ENCODE measurements at regions of chr10 and their contacts with region 1.

Region 1: GRCh38 chr10:60299961-60300883 is 89.5 kb downstream of the ANK3 start:
- DNase-seq: peak; percentile 65 to 90 (median 70)
- ATAC-seq: peak; percentile 85
- H3K4me3 ChIP-seq: peak overlapping the region; percentile 36
- H3K27ac ChIP-seq: peak overlapping the region; percentile 88
- H3K4me1 ChIP-seq: peaks cover 7 to 24% of the 10 kb centered on the region in 2 experiments; a peak in 4 of 5 replicates
- H3K27me3 ChIP-seq: no peaks in the 10 kb centered on the region
- CTCF ChIP-seq: peak in 2 of 3 experiments; percentile 20 to 44; a peak in 2 of 6 replicates
- EP300 ChIP-seq: peak; percentile 54
- POLR2A ChIP-seq: peak; percentile 72
- RAD21 ChIP-seq: peak in 1 of 2 experiments; percentile 23; a peak in 2 of 4 replicates

Region 2: DNA sequence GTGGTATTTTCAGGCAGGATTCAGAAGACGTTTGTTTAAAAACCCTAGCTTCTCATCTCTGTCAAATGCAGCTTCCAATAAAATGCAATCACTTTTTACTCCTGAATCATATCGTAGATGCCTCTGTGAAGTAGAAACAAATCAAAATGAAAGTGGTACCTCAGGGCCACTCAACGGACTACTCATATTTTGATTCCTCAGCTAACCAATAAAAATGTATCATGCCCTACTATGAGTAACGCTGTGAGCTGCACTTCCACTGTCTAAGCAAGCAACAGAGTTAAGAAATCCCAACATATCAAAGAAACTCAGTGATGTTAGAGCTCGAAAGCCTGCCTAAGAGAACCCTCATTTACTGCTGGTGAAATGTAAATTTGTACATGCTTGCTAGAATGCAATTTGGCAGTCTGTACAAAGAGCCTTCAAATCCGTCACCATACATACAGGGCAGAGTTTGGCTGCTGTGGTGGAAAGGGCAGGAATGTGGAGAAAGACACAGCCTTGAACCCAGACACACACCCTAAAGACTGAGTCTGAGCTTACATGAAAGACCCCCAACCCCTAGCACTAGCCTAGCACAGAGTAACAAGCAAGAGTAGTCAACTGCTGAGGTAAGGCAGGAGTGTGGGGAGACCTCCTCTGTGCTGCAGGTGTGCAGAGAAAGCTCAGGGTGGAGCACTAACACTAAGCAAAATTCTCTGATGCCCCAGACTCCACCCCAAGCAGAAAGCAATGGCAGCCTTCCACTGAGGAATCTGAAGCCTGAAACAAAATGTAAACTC is 62.1 kb before region 1 on chr10:
- CTCF ChIA-PET with region 1: no interaction called
- POLR2A ChIA-PET with region 1: no interaction called
- in situ Hi-C with region 1: no loop called
- intact Hi-C with region 1: loop called (anchors 2 kb)
- DNase-seq: peak in 2 of 4 experiments; percentile 60 to 62
- ATAC-seq: peak; percentile 99
- H3K4me3 ChIP-seq: no peak overlapping the region
- H3K27ac ChIP-seq: no peak overlapping the region
- H3K4me1 ChIP-seq: peaks cover 5 to 12% of the 10 kb centered on the region in 2 experiments; a peak in 2 of 5 replicates
- H3K27me3 ChIP-seq: no peaks in the 10 kb centered on the region
- CTCF ChIP-seq: peak; percentile 64 to 81 (median 76)
- EP300 ChIP-seq: no peak
- POLR2A ChIP-seq: no peak
- RAD21 ChIP-seq: peak; percentile 90 to 91

Region 3: GRCh38 chr10:60312818-60313588 is 12.8 kb after region 1 on chr10:
- CTCF ChIA-PET with region 1: no interaction called
- POLR2A ChIA-PET with region 1: interaction called, 28 read pairs
- in situ Hi-C with region 1: no loop called
- intact Hi-C with region 1: no loop called
- DNase-seq: peak; percentile 26 to 85 (median 58)
- ATAC-seq: peak; percentile 79
- H3K4me3 ChIP-seq: no peak overlapping the region
- H3K27ac ChIP-seq: peak overlapping the region; percentile 85
- H3K4me1 ChIP-seq: peaks cover 11 to 59% of the 10 kb centered on the region in 2 experiments
- H3K27me3 ChIP-seq: no peaks in the 10 kb centered on the region
- CTCF ChIP-seq: no peak
- EP300 ChIP-seq: peak; percentile 94
- POLR2A ChIP-seq: no peak
- RAD21 ChIP-seq: peak in 1 of 2 experiments; percentile 27; a peak in 2 of 4 replicates

Region 4: GRCh38 chr10:60589376-60589775 is 289.2 kb after region 1 on chr10:
- CTCF ChIA-PET with region 1: no interaction called
- POLR2A ChIA-PET with region 1: no interaction called
- in situ Hi-C with region 1: no loop called
- intact Hi-C with region 1: no loop called
- DNase-seq: no peak
- ATAC-seq: no peak
- H3K4me3 ChIP-seq: no peak overlapping the region
- H3K27ac ChIP-seq: no peak overlapping the region
- H3K4me1 ChIP-seq: no peaks in the 10 kb centered on the region
- H3K27me3 ChIP-seq: no peaks in the 10 kb centered on the region
- CTCF ChIP-seq: no peak
- EP300 ChIP-seq: no peak
- POLR2A ChIP-seq: no peak
- RAD21 ChIP-seq: no peak

Region 5: GRCh38 chr10:60778214-60779029 is 478.2 kb after region 1 on chr10 and contains the start of gene CDK1:
- CTCF ChIA-PET with region 1: no interaction called
- POLR2A ChIA-PET with region 1: no interaction called
- in situ Hi-C with region 1: no loop called
- intact Hi-C with region 1: loop called (anchors 10 kb)
- DNase-seq: peak; percentile 99 to 100 (median 100)
- ATAC-seq: peak; percentile 95
- H3K4me3 ChIP-seq: peak within 1 kb of the TSS; percentile 88
- H3K27ac ChIP-seq: peak within 1 kb of the TSS; percentile 94
- H3K4me1 ChIP-seq: peaks cover 0 to 11% of the 10 kb centered on the region in 2 experiments; a peak in 4 of 5 replicates
- H3K27me3 ChIP-seq: no peaks in the 10 kb centered on the region
- CTCF ChIP-seq: no peak
- EP300 ChIP-seq: peak; percentile 41
- POLR2A ChIP-seq: peak; percentile 99
- RAD21 ChIP-seq: no peak
- polyA plus RNA-seq, gene CDK1: 568 to 685 TPM